ENCODE measurements at regions of chr14 and their contacts with region 1.

Region 1: GRCh38 chr14:34722717-34723545 is 8.5 kb upstream of the CFL2 start:
- DNase-seq: peak; percentile 74
- H3K4me3 ChIP-seq: peak overlapping the region in 1 of 2 experiments; percentile 15; a peak in 1 of 4 replicates
- H3K27ac ChIP-seq: no peak overlapping the region
- H3K4me1 ChIP-seq: peaks cover 0 to 5% of the 10 kb centered on the region in 2 experiments; a peak in 2 of 4 replicates
- H3K27me3 ChIP-seq: no peaks in the 10 kb centered on the region
- CTCF ChIP-seq: peak; percentile 77
- EP300 ChIP-seq: no peak
- RAD21 ChIP-seq: peak; percentile 81

Region 2: DNA sequence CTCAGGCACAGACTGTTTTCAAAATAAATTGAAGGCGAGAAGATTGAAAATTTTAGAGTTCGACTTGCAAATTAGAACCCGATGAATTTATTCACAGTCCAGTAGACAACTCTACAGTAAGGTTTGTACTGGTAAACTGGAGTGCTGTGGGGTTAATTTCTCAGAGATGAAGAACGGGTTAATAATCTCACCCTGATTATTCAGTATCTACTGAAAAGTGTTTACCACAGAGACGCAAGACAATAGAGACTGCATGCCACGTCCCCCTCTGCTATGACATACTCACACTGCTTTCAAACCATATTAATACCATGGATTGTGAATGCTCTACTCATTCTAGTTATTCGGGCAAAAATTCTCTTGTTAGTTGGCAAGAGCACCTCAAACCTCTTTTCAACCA is 44.6 kb before region 1 on chr14:
- CTCF ChIA-PET with region 1: interaction called, 107 read pairs
- POLR2A ChIA-PET with region 1: no interaction called
- DNase-seq: no peak
- H3K4me3 ChIP-seq: no peak overlapping the region
- H3K27ac ChIP-seq: peak overlapping the region in 1 of 2 experiments; percentile 39; a peak in 2 of 4 replicates
- H3K4me1 ChIP-seq: peaks cover 3 to 15% of the 10 kb centered on the region in 2 experiments; a peak in 2 of 4 replicates
- H3K27me3 ChIP-seq: no peaks in the 10 kb centered on the region
- CTCF ChIP-seq: no peak
- EP300 ChIP-seq: no peak
- RAD21 ChIP-seq: no peak

Region 3: DNA sequence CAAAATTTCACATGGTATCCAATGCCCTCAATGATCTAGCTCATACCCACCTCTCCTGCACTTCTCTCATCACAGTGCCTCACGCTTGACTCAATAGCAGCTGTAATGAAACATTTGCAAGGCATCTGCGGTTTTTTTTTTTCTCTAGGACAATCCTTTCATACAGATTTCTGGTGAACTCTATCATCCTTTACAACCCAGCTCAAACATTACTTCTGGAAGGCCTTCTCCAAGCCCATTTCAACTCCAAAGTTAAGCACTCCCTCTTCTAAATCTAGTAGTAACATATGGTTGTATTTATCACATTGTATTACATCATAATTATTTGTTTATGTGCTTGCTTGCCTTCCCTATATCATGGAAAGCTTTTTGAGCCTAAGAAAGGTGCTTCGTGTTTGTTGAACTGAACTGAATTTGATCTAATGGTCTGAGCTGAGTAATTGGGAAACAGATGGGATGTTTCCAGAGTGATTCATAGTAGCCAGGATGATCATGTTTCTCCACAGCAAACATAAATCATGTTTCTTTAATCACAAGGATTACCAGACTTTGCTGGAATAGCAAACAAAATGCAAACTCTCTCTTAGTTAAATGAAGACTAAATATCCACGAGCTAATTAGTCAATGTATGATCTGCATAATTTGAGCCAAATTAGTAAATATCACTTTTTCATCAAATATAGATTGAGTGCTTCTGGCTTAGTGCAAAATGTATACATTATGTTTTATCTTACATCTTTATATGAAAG is 22.9 kb before region 1 on chr14:
- CTCF ChIA-PET with region 1: interaction called, 10 read pairs
- POLR2A ChIA-PET with region 1: no interaction called
- DNase-seq: peak; percentile 43
- H3K4me3 ChIP-seq: no peak overlapping the region
- H3K27ac ChIP-seq: peak overlapping the region; percentile 58 to 92
- H3K4me1 ChIP-seq: peaks cover 3 to 11% of the 10 kb centered on the region in 2 experiments; a peak in 2 of 4 replicates
- H3K27me3 ChIP-seq: no peaks in the 10 kb centered on the region
- CTCF ChIP-seq: no peak
- EP300 ChIP-seq: peak; percentile 39 to 81
- RAD21 ChIP-seq: no peak

Region 4: DNA sequence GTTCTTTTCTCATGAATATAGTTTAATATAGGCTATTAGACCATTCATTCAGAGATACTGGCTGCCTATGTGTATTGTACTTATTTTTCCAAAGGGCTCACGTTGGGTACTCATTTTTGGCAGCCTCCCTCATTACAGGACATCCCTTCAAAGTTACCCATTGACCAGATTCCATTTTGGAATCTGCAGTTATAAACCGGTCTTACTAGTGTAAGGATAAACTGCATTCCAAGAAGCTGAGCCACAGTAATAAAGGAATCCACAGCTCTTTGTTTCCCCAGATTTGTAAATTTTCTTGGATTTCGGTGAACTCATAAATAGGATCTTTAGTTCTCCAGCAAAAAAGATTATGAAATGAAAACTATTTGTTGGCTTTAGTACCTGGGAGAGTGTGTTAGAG is 10.3 kb after region 1 on chr14:
- CTCF ChIA-PET with region 1: interaction called, 26 read pairs
- POLR2A ChIA-PET with region 1: no interaction called
- DNase-seq: no peak
- H3K4me3 ChIP-seq: no peak overlapping the region
- H3K27ac ChIP-seq: no peak overlapping the region
- H3K4me1 ChIP-seq: no peaks in the 10 kb centered on the region
- H3K27me3 ChIP-seq: no peaks in the 10 kb centered on the region
- CTCF ChIP-seq: no peak
- EP300 ChIP-seq: no peak
- RAD21 ChIP-seq: no peak

Region 5: GRCh38 chr14:34766606-34767005 is 43.7 kb after region 1 on chr14:
- CTCF ChIA-PET with region 1: interaction called, 10 read pairs
- POLR2A ChIA-PET with region 1: no interaction called
- DNase-seq: no peak
- H3K4me3 ChIP-seq: no peak overlapping the region
- H3K27ac ChIP-seq: peak overlapping the region; percentile 48 to 53
- H3K4me1 ChIP-seq: peaks cover 0 to 8% of the 10 kb centered on the region in 2 experiments; a peak in 2 of 4 replicates
- H3K27me3 ChIP-seq: no peaks in the 10 kb centered on the region
- CTCF ChIP-seq: no peak
- EP300 ChIP-seq: no peak
- RAD21 ChIP-seq: no peak